Heart right ventricle (tissue), 16 donors: ENCODE measurements at regions of chr5 and their contacts with region 1.

Region 1: DNA sequence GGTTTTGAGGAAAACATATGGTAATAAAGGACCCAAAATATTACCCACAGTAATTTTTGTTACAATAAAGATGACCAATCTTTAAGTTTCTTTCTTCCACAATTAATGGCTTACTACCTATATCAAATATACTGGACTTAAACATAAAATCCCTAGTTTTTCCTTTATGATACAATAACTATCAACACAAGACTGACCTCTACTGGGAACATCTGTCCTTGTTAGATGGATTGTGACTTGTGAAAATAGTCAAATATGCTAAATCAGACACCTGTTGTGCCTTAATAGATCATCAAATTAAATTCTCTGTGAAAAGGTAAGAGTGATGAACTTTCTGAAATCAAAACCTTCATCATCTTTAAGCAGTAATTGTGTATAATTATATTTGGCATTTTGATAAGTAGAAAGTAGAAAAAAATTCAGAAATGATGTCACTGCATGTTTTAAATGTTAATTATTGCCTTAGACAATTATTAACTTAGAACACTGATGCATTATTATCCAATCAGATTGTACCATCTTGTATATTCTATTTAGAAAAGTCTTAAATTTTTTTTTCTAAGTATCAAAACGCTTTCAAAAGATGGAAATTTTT is 113.6 kb downstream of the DEPDC1B start:
- DNase-seq: no peak
- ATAC-seq: no peak
- H3K4me3 ChIP-seq: no peak overlapping the region
- H3K27ac ChIP-seq: no peak overlapping the region
- H3K4me1 ChIP-seq: no peaks in the 10 kb centered on the region
- H3K27me3 ChIP-seq: no peaks in the 10 kb centered on the region
- CTCF ChIP-seq: peak; percentile 37 to 72 (median 53)

Region 2: DNA sequence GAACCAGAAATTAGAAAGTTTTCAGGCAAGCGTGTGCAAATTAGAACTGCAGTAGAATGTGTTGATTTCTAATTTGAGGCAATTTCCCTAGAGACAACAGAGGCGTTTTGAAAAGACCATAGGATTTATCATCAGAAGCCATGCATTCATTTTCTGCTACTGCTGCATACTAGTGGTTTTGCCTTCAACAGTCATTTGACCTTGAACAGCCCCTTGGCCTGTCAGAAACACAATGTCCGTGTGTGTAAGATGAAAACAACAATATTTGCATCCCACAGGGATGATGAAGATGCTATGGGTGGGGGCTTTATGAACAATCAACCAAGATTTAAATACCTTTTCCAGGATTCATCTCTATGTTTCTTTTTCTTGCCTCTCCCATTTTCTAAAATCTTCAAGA is 766.6 kb before region 1 on chr5:
- intact Hi-C with region 1: loop called in 2 of 10 experiments (anchors 5 to 10 kb)
- DNase-seq: no peak
- ATAC-seq: no peak
- H3K4me3 ChIP-seq: no peak overlapping the region
- H3K27ac ChIP-seq: no peak overlapping the region
- H3K4me1 ChIP-seq: no peaks in the 10 kb centered on the region
- H3K27me3 ChIP-seq: peaks cover 0 to 21% (median 0%) of the 10 kb centered on the region in 7 donors
- CTCF ChIP-seq: no peak

Region 3: DNA sequence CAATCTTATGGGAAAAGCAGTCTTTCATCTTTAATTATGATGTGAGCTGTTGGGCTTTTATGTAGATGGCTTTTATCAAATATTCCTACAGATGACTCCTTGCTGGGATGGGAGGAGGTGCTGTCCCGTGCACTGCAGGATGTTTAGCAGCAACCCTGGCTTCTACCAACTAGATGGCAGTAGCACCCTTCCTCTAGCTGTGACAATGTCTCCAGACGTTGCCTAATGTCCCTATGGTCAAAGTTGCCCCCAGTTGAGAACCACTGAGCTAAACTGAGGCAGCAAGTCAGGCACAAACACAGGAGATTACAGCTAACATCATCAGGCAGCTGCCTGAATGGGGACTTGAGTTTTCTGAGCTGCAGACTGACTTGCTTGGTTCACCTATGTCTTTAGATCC is 291.0 kb before region 1 on chr5:
- intact Hi-C with region 1: loop called in 6 of 10 experiments (anchors 5 to 10 kb)
- DNase-seq: peak in 1 of 2 donors; percentile 12
- ATAC-seq: peak in 1 of 8 donors; percentile 58
- H3K4me3 ChIP-seq: no peak overlapping the region
- H3K27ac ChIP-seq: no peak overlapping the region
- H3K4me1 ChIP-seq: no peaks in the 10 kb centered on the region
- H3K27me3 ChIP-seq: no peaks in the 10 kb centered on the region
- CTCF ChIP-seq: peak in 8 of 9 donors; percentile 11 to 63 (median 45)

Region 4: DNA sequence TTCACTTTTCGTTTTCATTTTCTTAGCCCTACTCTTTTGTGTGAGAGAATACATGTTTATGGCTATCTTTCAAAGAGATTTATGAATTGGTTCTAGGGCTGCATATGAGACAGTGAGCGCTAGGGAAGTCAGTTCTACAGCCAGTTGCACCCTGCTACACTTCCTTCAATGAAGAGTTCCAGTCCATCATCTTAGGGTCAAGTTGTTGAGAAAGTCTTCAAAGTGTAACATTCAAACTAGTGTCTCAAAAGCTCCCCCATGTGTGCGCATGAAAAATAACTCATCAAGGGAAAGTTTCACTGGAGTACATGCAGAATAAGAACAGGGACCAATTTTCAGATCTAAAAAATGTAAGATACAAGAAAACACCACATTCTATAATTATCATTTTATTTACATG is 203.7 kb before region 1 on chr5:
- intact Hi-C with region 1: loop called in 2 of 10 experiments (anchors 5 to 10 kb)
- DNase-seq: no peak
- ATAC-seq: no peak
- H3K4me3 ChIP-seq: no peak overlapping the region
- H3K27ac ChIP-seq: no peak overlapping the region
- H3K4me1 ChIP-seq: no peaks in the 10 kb centered on the region
- H3K27me3 ChIP-seq: no peaks in the 10 kb centered on the region
- CTCF ChIP-seq: peak in 5 of 9 donors; percentile 26 to 50 (median 31)

Region 5: GRCh38 chr5:60473654-60474053 is 112.8 kb before region 1 on chr5:
- intact Hi-C with region 1: no loop called
- DNase-seq: no peak
- ATAC-seq: no peak
- H3K4me3 ChIP-seq: no peak overlapping the region
- H3K27ac ChIP-seq: no peak overlapping the region
- H3K4me1 ChIP-seq: no peaks in the 10 kb centered on the region
- H3K27me3 ChIP-seq: no peaks in the 10 kb centered on the region
- CTCF ChIP-seq: no peak